Gastrocnemius medialis (tissue), 4 donors: ENCODE measurements at regions of chr14 and their contacts with region 1.

Region 1: GRCh38 chr14:33839193-33840076 is 111.4 kb downstream of the EGLN3 start:
- DNase-seq: peak; percentile 9 to 38
- ATAC-seq: peak; percentile 77 to 92
- H3K4me3 ChIP-seq: no peak overlapping the region
- H3K27ac ChIP-seq: no peak overlapping the region
- H3K4me1 ChIP-seq: peaks cover 3 to 6% of the 10 kb centered on the region in 2 donors
- H3K27me3 ChIP-seq: no peaks in the 10 kb centered on the region
- CTCF ChIP-seq: peak; percentile 74 to 85 (median 79)
- POLR2A ChIP-seq: no peak

Region 2: GRCh38 chr14:33484264-33484663 is 355.2 kb before region 1 on chr14:
- in situ Hi-C with region 1: no loop called
- intact Hi-C with region 1: no loop called
- DNase-seq: no peak
- ATAC-seq: peak in 1 of 2 donors; percentile 74
- H3K4me3 ChIP-seq: no peak overlapping the region
- H3K27ac ChIP-seq: no peak overlapping the region
- H3K4me1 ChIP-seq: no peaks in the 10 kb centered on the region
- H3K27me3 ChIP-seq: no peaks in the 10 kb centered on the region
- CTCF ChIP-seq: no peak
- POLR2A ChIP-seq: no peak

Region 3: DNA sequence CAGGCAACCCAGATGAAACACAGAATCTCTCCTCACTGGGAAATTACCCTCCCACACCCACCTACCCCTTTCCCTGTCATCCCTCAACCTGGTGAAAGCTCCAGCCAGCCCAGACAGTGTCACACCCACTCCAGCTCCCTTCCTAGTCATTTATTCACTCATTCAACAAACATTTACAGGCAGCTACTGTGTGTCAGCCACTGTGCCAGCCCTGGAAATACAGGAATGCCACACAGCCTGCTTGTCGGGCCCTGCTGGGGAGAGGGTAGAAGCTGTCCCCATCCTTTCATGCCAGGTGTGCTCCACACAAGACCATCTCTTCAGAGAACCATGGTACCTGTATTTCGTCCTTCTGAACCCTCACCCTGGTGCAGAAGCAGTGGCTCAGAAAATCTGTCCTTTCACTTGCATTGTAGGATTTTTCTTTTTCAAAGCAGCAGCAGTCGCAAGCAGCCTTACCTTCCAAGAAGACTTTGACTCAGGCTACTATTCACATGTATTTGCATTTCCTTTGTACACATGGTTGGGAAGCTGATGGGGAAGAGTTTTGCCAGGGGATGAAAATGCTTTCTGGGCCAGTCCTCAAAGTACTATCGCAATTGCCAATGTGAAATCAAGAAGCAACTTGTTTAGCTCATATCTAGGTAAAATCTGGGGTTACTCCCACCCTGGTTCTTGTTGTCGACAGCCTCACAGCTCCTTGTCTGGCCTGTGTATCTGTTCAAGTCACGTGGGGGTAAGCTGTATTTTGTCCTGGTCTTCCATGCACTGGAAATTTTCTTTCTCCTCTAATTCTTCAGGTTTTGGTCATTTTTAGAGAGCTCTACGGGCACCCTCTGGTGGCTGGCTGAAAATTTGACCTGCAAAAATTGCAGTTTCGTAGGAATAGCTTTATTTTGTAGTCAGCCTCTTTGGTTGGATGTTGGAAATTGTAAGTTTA is 258.9 kb after region 1 on chr14:
- in situ Hi-C with region 1: loop called in 3 of 4 experiments (anchors 5 to 10 kb)
- intact Hi-C with region 1: loop called (anchors 2 kb)
- DNase-seq: no peak
- ATAC-seq: peak; percentile 51 to 61
- H3K4me3 ChIP-seq: no peak overlapping the region
- H3K27ac ChIP-seq: no peak overlapping the region
- H3K4me1 ChIP-seq: no peaks in the 10 kb centered on the region
- H3K27me3 ChIP-seq: no peaks in the 10 kb centered on the region
- CTCF ChIP-seq: peak; percentile 34 to 57 (median 56)
- POLR2A ChIP-seq: no peak

Region 4: GRCh38 chr14:34104489-34105397 is 265.3 kb after region 1 on chr14:
- in situ Hi-C with region 1: loop called in 3 of 4 experiments (anchors 5 to 10 kb)
- intact Hi-C with region 1: loop called (anchors 2 kb)
- DNase-seq: peak in 1 of 2 donors; percentile 25
- ATAC-seq: peak; percentile 74 to 88
- H3K4me3 ChIP-seq: no peak overlapping the region
- H3K27ac ChIP-seq: peak overlapping the region in 3 of 4 donors; percentile 6 to 51 (median 29)
- H3K4me1 ChIP-seq: peaks cover 13 to 21% of the 10 kb centered on the region in 2 donors
- H3K27me3 ChIP-seq: no peaks in the 10 kb centered on the region
- CTCF ChIP-seq: no peak
- POLR2A ChIP-seq: no peak

Region 5: GRCh38 chr14:34300882-34301734 is 461.7 kb after region 1 on chr14:
- in situ Hi-C with region 1: loop called in 2 of 4 experiments (anchors 10 kb)
- intact Hi-C with region 1: loop called (anchors 1 kb)
- DNase-seq: no peak
- ATAC-seq: peak in 1 of 2 donors; percentile 51
- H3K4me3 ChIP-seq: no peak overlapping the region
- H3K27ac ChIP-seq: no peak overlapping the region
- H3K4me1 ChIP-seq: peaks cover 0 to 9% of the 10 kb centered on the region in 2 donors
- H3K27me3 ChIP-seq: no peaks in the 10 kb centered on the region
- CTCF ChIP-seq: peak in 4 of 5 experiments; percentile 28 to 63 (median 59)
- POLR2A ChIP-seq: no peak

Region 6: GRCh38 chr14:34322940-34323418 is 483.5 kb after region 1 on chr14:
- in situ Hi-C with region 1: loop called in 2 of 4 experiments (anchors 10 kb)
- intact Hi-C with region 1: loop called (anchors 5 kb)
- DNase-seq: peak in 1 of 2 donors; percentile 21
- ATAC-seq: peak in 1 of 2 donors; percentile 72
- H3K4me3 ChIP-seq: no peak overlapping the region
- H3K27ac ChIP-seq: no peak overlapping the region
- H3K4me1 ChIP-seq: peaks cover 0 to 3% of the 10 kb centered on the region in 2 donors
- H3K27me3 ChIP-seq: no peaks in the 10 kb centered on the region
- CTCF ChIP-seq: peak; percentile 29 to 74 (median 54)
- POLR2A ChIP-seq: no peak